ENCODE measurements at regions of chr17 and their contacts with region 1.

Region 1: GRCh38 chr17:50841949-50842354 is 6.6 kb downstream of the WFIKKN2 start:
- DNase-seq: peak; percentile 84
- CTCF ChIP-seq: peak; percentile 70

Region 2: DNA sequence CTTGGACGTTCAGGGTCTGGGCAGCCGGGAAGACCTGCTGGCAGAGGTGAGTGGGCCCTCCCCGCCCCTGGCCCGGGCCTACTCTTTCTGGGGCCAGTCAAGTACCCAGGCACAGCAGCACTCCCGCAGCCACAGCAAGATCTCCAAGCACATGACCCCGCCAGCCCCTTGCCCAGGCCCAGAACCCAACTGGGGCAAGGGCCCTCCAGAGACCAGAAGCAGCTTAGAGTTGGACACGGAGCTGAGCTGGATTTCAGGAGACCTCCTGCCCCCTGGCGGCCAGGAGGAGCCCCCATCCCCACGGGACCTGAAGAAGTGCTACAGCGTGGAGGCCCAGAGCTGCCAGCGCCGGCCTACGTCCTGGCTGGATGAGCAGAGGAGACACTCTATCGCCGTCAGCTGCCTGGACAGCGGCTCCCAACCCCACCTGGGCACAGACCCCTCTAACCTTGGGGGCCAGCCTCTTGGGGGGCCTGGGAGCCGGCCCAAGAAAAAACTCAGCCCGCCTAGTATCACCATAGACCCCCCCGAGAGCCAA is 215.8 kb before region 1 on chr17:
- CTCF ChIA-PET with region 1: no interaction called
- POLR2A ChIA-PET with region 1: no interaction called
- DNase-seq: peak; percentile 79
- CTCF ChIP-seq: peak; percentile 73

Region 3: DNA sequence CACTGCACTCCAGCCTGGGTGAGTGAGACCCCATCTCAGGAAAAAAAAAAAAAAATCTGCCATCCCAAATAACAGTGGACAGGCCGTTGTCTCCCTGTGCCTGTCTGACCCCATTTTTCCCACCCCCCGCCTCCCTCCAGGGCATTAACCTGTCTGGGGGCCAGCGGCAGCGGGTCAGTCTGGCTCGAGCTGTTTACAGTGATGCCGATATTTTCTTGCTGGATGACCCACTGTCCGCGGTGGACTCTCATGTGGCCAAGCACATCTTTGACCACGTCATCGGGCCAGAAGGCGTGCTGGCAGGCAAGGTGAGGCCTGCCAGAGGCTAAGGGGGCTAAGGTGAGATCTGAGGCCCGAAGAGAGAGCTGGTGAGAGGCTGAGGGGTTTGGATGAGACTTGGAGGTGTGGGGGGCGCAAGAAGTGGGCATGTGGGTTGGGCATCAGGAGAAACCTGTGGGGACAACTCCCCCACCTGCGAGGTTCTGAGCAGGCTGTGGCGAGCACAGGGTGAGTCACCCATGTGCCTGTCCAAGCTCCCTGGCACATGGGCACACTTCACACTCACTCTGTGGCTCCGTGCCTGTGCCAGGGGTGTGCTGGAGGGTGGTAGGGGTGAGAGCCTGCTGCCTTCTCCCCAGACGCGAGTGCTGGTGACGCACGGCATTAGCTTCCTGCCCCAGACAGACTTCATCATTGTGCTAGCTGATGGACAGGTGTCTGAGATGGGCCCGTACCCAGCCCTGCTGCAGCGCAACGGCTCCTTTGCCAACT is 168.9 kb before region 1 on chr17:
- CTCF ChIA-PET with region 1: no interaction called
- POLR2A ChIA-PET with region 1: no interaction called
- DNase-seq: no peak
- CTCF ChIP-seq: no peak

Region 4: DNA sequence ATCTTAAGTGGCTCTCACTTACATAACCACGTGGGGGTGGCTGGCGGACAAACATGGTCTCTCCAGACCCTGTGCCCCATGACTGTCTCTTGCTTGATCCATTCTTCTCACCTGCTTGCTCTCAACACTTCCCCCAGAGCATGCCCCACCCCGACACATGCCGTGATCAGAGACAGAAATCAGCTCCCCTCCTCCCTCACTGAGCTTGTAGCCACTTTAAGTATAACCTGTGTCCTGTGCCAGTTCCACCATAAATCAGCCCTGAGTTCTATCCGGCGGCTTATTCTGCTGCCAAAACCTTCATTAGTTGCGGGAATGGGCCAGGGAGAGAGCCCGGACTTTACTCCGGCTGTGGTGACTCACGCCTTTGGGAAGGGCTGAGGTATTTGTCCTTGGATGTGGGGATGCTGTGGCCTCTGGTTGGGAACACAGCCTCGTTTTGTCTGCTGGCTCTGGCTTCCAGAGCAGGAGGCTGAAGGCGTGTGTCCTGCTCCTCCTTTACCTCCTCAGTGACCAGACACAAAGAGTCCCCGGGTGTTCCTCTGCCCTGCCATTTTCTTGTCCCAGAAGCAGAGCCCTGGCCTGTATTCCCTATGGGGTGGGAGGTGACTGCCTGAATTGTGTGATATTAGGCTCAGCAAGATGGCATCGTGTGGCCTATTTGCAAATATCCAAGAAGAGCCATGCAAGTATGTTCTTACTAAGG is 155.3 kb before region 1 on chr17:
- CTCF ChIA-PET with region 1: no interaction called
- POLR2A ChIA-PET with region 1: no interaction called
- DNase-seq: no peak
- CTCF ChIP-seq: no peak

Region 5: DNA sequence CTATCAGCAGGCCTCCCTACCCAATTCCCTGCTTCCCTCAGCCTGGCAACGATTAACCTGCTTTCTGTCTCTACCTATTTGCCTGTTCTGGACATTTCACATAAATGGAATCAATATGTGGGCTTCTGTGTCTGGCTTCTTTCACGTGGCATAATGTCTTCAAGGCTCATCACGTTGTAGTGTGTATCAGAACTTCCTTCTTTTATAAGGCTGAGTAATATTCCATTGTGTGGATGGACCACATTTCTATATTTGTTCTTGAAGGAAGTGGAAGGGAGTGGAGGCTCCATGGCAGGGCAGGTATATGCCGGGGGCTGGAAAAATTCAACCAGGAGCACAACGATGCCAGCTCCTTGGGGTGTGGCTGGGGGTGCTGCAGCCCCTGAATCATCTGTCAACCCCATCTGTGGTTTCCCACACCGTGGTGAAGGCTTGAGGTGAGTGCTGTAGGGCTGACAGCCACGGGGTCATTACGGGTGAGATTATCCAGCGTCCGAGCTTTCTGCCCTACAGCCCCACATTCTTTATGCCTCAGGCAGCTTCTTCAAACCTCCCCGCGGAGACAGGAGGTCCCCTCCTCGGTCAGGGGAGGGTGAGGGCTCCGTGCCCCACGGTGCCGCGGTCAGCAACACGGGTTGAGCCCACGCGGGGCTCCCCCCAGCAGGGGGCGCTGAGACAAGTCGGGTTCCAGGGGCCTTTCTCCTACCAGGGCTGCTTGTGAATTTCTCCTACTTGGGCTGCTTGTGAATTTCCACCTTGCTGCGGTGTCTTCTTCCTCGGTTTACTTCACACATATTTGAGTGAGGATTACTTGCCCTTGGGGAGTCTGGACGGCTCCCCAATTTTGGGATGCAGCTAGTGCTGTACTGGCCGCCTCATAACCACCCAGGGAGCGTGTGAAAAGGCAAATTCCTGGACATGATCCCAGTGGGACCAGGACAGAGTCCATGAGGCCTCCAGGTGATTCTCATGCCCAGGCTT is 24.9 kb before region 1 on chr17:
- CTCF ChIA-PET with region 1: interaction called, 79 read pairs
- POLR2A ChIA-PET with region 1: no interaction called
- DNase-seq: peak; percentile 71
- CTCF ChIP-seq: peak; percentile 66

Region 6: GRCh38 chr17:50853015-50853615 is 11.2 kb after region 1 on chr17:
- CTCF ChIA-PET with region 1: interaction called, 67 read pairs
- POLR2A ChIA-PET with region 1: no interaction called
- DNase-seq: no peak
- CTCF ChIP-seq: no peak

Region 7: GRCh38 chr17:50875074-50875473 is 33.1 kb after region 1 on chr17:
- CTCF ChIA-PET with region 1: no interaction called
- POLR2A ChIA-PET with region 1: no interaction called
- DNase-seq: no peak
- CTCF ChIP-seq: no peak

Region 8: GRCh38 chr17:50949989-50950881 is 108.3 kb after region 1 on chr17:
- CTCF ChIA-PET with region 1: interaction called, 228 read pairs
- POLR2A ChIA-PET with region 1: no interaction called
- DNase-seq: peak; percentile 79
- CTCF ChIP-seq: peak; percentile 89

Measured in GM10248 (cell line).